ENCODE measurements at regions of chr1 and their contacts with region 1.

Region 1: GRCh38 chr1:17551755-17552234 is 12.3 kb downstream of the ARHGEF10L start:
- DNase-seq: no peak
- H3K4me3 ChIP-seq: no peak overlapping the region
- CTCF ChIP-seq: no peak

Region 2: DNA sequence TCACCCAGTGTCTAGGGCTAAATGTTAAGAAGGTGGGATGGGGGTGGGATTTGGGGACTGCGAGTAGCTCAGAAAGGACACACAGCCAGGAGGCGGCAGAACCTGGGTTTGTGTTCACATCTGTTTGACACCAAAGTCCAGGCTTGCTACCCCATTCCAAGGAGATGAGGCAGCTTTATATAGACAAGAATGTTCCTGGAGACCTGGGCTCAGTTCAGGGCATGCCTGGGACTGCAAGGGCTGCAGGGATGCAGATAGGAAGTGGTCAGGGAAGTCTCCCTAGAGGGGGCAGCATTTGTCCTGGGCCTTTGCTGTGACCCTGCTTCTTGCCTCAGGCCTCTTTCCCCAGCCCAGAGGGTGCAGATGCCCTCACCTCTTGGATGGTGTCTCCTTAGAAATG is 286.6 kb before region 1 on chr1:
- CTCF ChIA-PET with region 1: no interaction called
- POLR2A ChIA-PET with region 1: no interaction called
- DNase-seq: no peak
- H3K4me3 ChIP-seq: no peak overlapping the region
- CTCF ChIP-seq: peak; percentile 0

Region 3: DNA sequence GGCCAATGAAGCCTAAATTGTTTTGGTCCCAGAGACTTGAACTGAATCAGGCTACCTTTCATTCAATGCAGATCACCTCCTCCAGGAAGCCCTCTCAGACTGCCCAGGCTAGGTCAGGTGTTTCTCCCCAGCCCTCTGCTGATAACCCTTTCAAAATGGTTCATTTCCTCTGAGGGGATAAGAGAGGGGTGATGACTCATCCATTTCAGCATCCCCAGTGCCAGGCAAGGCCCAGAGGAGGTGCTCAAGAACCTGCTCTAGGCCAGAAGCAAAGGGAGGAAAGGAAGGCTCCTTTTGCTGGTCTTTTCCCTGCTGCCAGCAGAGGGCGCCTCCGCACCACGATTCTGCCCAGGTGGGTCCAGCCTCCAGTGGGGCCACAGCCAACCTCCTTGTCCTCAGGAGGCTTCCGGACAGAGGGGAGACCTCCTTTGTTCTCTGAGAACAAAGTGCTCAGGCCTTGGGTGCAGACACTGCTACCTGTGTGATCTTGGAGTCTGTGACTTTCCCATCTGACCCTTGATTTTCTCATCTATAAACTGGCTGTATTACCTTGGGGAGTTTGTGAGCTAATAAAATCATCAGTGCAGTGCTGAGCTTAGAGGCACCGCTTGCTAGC is 57.6 kb before region 1 on chr1:
- CTCF ChIA-PET with region 1: interaction called, 10 read pairs
- POLR2A ChIA-PET with region 1: no interaction called
- DNase-seq: no peak
- H3K4me3 ChIP-seq: no peak overlapping the region
- CTCF ChIP-seq: peak; percentile 94

Region 4: GRCh38 chr1:17569200-17570161 is 17.7 kb after region 1 on chr1:
- CTCF ChIA-PET with region 1: interaction called, 6 read pairs
- POLR2A ChIA-PET with region 1: interaction called, 11 read pairs
- DNase-seq: peak; percentile 71
- H3K4me3 ChIP-seq: no peak overlapping the region
- CTCF ChIP-seq: no peak

Region 5: DNA sequence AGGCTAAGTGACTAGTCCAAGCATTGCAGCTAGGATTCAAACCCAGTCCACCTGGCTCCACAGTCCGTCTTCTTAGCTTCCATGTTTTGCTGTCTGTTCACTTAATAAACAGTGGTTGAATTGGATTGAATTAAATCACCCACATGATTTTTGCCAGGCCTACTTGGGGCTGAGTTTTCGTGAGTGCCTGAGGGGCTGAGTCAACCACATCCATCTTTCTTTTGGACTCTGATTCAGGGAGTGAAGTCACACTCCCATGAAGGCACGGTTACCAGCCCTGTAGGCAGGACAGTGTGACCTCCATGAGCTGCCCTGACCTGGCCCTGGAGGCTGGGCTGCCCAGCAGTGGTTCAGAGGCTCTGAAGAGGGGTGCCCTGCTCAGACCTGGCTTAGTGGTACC is 327.0 kb after region 1 on chr1:
- CTCF ChIA-PET with region 1: no interaction called
- POLR2A ChIA-PET with region 1: no interaction called
- DNase-seq: peak; percentile 50
- H3K4me3 ChIP-seq: no peak overlapping the region
- CTCF ChIP-seq: no peak